Activated CD4-positive, alpha-beta T cell treated with anti-CD3 and anti-CD28 coated beads for 36 hours (primary cell): ENCODE measurements at regions of chr19 and their contacts with region 1.

Region 1: GRCh38 chr19:48999481-49000325 is 6.0 kb downstream of the RUVBL2 start:
- DNase-seq: peak; percentile 86
- ATAC-seq: peak; percentile 90
- H3K4me3 Mint-ChIP-seq: no peak overlapping the region
- H3K27ac Mint-ChIP-seq: no peak overlapping the region
- H3K4me1 Mint-ChIP-seq: peaks cover 18% of the 10 kb centered on the region
- H3K27me3 Mint-ChIP-seq: no peaks in the 10 kb centered on the region

Region 2: DNA sequence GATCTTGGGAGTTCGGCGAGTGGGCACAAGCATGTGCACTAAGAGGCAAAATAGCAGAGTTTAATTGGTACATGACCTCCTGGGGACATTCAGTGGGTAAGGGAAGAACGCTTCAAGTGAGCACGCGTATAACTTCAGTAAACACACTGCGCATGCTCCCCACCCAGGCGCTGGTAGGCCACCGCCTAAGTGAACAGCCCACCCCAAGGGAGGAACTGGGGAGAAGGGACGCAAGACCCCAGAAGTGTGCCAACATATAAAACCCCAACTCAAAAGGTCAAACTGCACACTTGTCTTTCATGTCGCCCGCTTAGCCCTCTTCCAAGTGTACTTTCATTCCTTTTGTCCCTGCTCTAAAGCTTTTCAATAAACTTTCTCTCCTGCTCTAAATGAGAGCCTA is 316.4 kb before region 1 on chr19:
- CTCF ChIA-PET with region 1: no interaction called
- POLR2A ChIA-PET with region 1: no interaction called
- intact Hi-C with region 1: no loop called
- DNase-seq: peak; percentile 38
- ATAC-seq: no peak
- H3K4me3 Mint-ChIP-seq: no peak overlapping the region
- H3K27ac Mint-ChIP-seq: no peak overlapping the region
- H3K4me1 Mint-ChIP-seq: no peaks in the 10 kb centered on the region
- H3K27me3 Mint-ChIP-seq: no peaks in the 10 kb centered on the region

Region 3: DNA sequence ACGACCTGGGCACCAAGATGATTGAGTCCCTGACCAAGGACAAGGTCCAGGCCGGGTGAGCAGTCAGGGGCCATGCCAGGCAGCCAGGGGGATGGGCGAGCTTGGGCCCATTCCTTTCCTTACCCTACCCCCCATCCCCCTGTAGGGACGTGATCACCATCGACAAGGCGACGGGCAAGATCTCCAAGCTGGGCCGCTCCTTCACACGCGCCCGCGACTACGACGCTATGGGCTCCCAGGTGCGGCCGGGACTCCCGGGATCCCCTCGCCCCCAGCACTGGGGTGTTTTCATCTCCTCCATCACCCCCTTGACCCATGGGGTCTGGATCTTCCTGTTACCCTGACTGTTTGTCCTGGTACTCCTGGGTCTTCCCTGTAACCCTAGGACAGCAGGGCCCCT is 10.1 kb after region 1 on chr19:
- CTCF ChIA-PET with region 1: interaction called, 11 read pairs
- POLR2A ChIA-PET with region 1: interaction called, 3 read pairs
- intact Hi-C with region 1: no loop called
- DNase-seq: no peak
- ATAC-seq: no peak
- H3K4me3 Mint-ChIP-seq: no peak overlapping the region
- H3K27ac Mint-ChIP-seq: no peak overlapping the region
- H3K4me1 Mint-ChIP-seq: no peaks in the 10 kb centered on the region
- H3K27me3 Mint-ChIP-seq: no peaks in the 10 kb centered on the region

Region 4: DNA sequence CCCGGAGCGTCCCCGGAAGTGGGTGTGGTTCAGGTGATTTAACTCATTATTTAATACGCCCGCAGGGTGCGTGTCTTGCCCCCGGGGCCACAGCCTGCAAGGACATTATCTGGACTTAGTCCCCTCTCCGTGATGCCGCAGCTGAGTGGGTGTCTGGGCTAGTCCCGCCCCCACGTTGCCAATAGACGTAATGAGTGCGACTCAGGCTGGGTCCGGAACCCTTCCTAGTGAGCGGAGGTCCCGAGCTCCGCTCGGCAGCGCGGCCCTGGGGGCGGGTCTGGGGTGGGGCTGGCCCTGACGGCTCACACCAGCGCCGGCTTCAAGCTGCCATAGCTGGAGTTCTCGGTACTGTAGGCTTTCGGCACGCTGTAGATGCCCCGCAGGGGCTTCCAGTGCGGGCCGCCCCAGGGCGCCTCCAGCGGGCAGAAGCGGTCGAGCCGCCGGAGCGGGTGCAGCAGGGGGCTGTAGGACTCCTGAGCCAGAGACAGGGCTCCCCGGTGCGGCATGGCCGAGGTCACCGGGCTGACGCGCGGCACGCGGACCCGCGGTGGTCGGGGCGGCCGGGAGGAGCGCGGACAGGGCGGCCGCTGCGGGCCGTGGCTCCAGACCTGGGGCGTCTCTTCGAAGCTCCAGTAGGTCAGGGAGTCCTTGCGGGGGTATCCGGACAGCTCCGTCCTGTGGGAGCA is 18.1 kb after region 1 on chr19:
- CTCF ChIA-PET with region 1: interaction called, 13 read pairs
- POLR2A ChIA-PET with region 1: no interaction called
- intact Hi-C with region 1: no loop called
- DNase-seq: peak; percentile 80
- ATAC-seq: peak; percentile 76
- H3K4me3 Mint-ChIP-seq: peak overlapping the region; percentile 76
- H3K27ac Mint-ChIP-seq: no peak overlapping the region
- H3K4me1 Mint-ChIP-seq: peaks cover 16% of the 10 kb centered on the region
- H3K27me3 Mint-ChIP-seq: peaks cover 6% of the 10 kb centered on the region